Tibial artery (tissue), 4 donors: ENCODE measurements at regions of chr12 and their contacts with region 1.

Region 1: GRCh38 chr12:106078358-106079010 is 60.3 kb downstream of the NUAK1 start:
- DNase-seq: peak; percentile 66 to 82
- H3K4me3 ChIP-seq: no peak overlapping the region
- H3K27ac ChIP-seq: peak overlapping the region; percentile 78 to 86
- H3K4me1 ChIP-seq: peaks cover 0 to 94% (median 72%) of the 10 kb centered on the region in 4 donors
- H3K27me3 ChIP-seq: no peaks in the 10 kb centered on the region
- CTCF ChIP-seq: no peak

Region 2: GRCh38 chr12:105967038-105967776 is 111.3 kb before region 1 on chr12:
- intact Hi-C with region 1: no loop called
- DNase-seq: no peak
- H3K4me3 ChIP-seq: no peak overlapping the region
- H3K27ac ChIP-seq: peak overlapping the region; percentile 57 to 58
- H3K4me1 ChIP-seq: peaks cover 0 to 34% (median 7%) of the 10 kb centered on the region in 4 donors
- H3K27me3 ChIP-seq: no peaks in the 10 kb centered on the region
- CTCF ChIP-seq: no peak

Region 3: GRCh38 chr12:106022568-106023012 is 55.9 kb before region 1 on chr12:
- intact Hi-C with region 1: loop called (anchors 10 kb)
- DNase-seq: no peak
- H3K4me3 ChIP-seq: no peak overlapping the region
- H3K27ac ChIP-seq: no peak overlapping the region
- H3K4me1 ChIP-seq: peaks cover 0 to 23% (median 7%) of the 10 kb centered on the region in 4 donors
- H3K27me3 ChIP-seq: no peaks in the 10 kb centered on the region
- CTCF ChIP-seq: no peak